ENCODE measurements at regions of chr3 and their contacts with region 1.

Region 1: DNA sequence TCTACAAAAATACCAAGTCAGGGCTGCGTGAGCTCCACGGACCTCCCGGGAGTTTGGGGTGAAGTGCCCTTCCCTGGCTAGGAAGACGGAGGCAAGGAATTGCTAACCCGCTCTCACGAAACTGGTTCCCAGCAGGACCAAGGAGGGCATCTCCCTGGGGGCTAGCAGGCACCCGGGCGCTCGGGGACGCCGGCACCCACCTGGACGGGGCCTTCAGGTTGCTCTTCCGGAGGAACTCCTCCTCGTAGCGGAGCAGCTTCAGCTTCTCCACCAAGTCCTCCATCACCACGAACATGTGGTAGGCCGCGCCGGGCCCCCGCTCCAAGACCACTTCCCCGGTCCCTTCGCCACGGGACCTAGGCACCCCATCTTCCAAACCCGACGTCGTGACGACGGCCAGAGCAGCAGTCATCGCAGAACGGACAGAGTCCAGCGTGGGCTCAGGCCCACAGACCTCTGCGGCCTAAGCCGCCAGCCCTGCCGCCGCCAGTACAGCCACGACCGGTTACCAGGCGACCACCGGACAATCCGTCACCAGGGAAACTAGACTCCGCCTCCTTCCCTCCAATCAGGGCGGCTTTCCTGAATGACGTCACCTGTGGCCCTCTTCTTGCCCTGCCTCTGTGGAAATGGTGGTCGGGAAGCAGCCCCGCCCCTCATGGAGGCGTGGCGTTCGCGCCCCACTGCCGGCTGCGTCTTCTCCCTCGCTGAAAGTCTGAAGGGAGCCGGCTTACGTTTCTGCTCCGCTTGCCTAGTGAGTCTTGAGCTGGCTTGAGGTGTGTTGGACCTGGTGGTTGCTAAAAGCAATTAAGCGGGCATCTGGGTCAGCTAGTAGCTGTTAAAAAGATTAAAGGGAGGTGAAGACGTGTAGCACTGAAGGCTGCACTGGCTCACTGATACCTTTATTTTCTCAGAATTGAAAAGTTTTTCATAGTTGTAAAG is at the start of gene IFT57:
- DNase-seq: peak; percentile 94
- H3K4me3 Mint-ChIP-seq: peak within 1 kb of the TSS; percentile 87
- H3K27ac Mint-ChIP-seq: peak within 1 kb of the TSS; percentile 93
- H3K4me1 Mint-ChIP-seq: peaks cover 51% of the 10 kb centered on the region
- H3K27me3 Mint-ChIP-seq: no peaks in the 10 kb centered on the region
- total RNA-seq, gene IFT57: 27.0 and 34.9 TPM in 2 replicates

Region 2: GRCh38 chr3:107522510-107523288 is 699.5 kb before region 1 on chr3 and contains the start of gene BBX:
- intact Hi-C with region 1: loop called (anchors 5 kb)
- DNase-seq: peak; percentile 88
- H3K4me3 Mint-ChIP-seq: peak within 1 kb of the TSS; percentile 92
- H3K27ac Mint-ChIP-seq: peak within 1 kb of the TSS; percentile 96
- H3K4me1 Mint-ChIP-seq: peaks cover 32% of the 10 kb centered on the region
- H3K27me3 Mint-ChIP-seq: peaks cover 4% of the 10 kb centered on the region
- total RNA-seq, gene BBX: 38.1 and 45.1 TPM in 2 replicates

Region 3: GRCh38 chr3:107938143-107938542 is 284.0 kb before region 1 on chr3:
- intact Hi-C with region 1: loop called (anchors 1 kb)
- DNase-seq: no peak
- H3K4me3 Mint-ChIP-seq: no peak overlapping the region
- H3K27ac Mint-ChIP-seq: no peak overlapping the region
- H3K4me1 Mint-ChIP-seq: peaks cover 17% of the 10 kb centered on the region
- H3K27me3 Mint-ChIP-seq: peaks cover 5% of the 10 kb centered on the region

Region 4: DNA sequence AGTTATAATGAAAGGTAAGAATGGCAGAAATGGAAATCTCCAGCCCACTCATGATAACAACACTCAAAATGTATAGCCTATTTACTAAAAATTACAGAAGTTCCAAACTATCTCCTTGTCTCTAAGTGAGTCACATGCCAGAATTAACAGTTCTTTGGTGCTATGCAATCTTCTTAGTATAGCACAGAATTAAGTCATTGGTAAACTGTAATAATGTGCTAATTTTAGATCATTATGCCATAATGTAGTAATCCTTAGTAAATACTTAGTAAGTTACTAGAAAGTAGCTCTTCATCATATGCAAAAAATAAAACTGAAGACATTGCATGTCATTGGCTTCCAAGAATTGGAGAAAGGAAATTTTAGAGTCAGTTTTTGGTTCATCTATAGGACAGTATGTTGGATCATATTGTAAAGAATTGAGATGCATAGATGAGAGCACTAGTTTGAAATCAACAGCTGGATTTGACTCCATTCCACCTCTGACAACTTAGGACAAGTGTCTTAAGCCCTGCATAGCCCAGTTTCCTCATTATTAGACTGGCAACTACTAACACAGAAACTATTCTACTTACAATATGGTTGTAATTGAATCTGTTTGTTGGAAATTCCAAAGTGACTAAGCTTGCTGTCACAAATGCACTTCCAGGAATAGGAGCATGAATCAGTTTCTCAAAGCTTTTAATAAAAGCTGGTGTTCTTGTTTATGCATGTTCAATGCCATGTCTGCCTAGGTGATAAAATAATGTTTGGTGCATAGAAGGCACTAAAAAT is 91.3 kb before region 1 on chr3:
- intact Hi-C with region 1: loop called (anchors 2 kb)
- DNase-seq: no peak
- H3K4me3 Mint-ChIP-seq: peak overlapping the region; percentile 24
- H3K27ac Mint-ChIP-seq: peak overlapping the region; percentile 72
- H3K4me1 Mint-ChIP-seq: peaks cover 90% of the 10 kb centered on the region
- H3K27me3 Mint-ChIP-seq: no peaks in the 10 kb centered on the region

Region 5: GRCh38 chr3:108342837-108343478 is 120.8 kb after region 1 on chr3:
- intact Hi-C with region 1: loop called (anchors 1 kb)
- DNase-seq: no peak
- H3K4me3 Mint-ChIP-seq: peak overlapping the region; percentile 5
- H3K27ac Mint-ChIP-seq: peak overlapping the region; percentile 59
- H3K4me1 Mint-ChIP-seq: peaks cover 37% of the 10 kb centered on the region
- H3K27me3 Mint-ChIP-seq: peaks cover 4% of the 10 kb centered on the region

Region 6: DNA sequence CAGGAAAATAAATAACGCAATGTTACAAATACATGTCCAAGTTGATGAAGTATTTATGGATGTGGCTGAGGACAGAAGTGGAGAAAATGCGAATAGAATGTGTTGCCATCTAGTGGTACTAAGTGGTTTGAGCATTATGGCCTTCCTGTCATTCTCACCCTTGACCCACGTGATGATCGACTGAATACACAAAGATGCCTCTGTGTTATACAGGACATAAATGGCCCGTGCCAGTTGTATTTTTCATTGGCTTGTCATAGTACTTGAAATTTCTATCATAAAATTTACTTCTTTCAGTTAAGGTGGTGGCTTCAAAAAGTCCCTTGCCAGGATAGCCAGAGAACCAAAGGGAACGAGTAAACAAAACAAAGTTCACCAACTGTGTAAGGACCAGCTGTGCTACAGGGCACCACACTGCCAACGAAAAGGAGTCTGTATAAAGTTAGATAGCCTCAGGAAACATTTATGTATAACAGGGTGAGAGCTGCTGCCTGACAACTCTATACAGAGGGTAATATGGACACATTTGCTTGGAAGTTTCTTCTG is 184.6 kb after region 1 on chr3:
- intact Hi-C with region 1: loop called (anchors 5 kb)
- DNase-seq: peak; percentile 9
- H3K4me3 Mint-ChIP-seq: no peak overlapping the region
- H3K27ac Mint-ChIP-seq: no peak overlapping the region
- H3K4me1 Mint-ChIP-seq: peaks cover 11% of the 10 kb centered on the region
- H3K27me3 Mint-ChIP-seq: no peaks in the 10 kb centered on the region